Activated CD4-positive, alpha-beta T cell treated with anti-CD3 and anti-CD28 coated beads for 36 hours (primary cell): ENCODE measurements at regions of chr9 and their contacts with region 1.

Region 1: DNA sequence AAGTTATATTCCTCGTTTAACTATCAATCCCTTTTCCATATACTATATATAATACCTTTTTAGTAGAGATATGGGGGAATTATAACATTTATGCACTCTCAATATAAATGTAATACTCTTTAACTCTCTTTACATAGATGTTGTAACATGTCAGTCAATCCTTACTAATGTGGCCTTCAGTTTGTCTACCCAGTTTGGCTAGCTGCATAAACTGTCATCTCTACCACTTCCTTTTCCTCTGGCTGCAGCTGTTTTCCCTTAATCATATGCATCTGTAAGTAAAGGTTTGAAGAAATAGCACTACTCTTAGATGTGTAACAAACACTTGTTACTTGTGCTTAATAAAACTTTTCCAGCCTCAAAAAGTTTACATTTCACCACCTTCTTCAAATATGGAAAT is 13.4 kb downstream of the ABHD17B start:
- DNase-seq: no peak
- ATAC-seq: peak; percentile 69
- H3K4me3 Mint-ChIP-seq: no peak overlapping the region
- H3K27ac Mint-ChIP-seq: no peak overlapping the region
- H3K4me1 Mint-ChIP-seq: peaks cover 75% of the 10 kb centered on the region
- H3K27me3 Mint-ChIP-seq: no peaks in the 10 kb centered on the region

Region 2: DNA sequence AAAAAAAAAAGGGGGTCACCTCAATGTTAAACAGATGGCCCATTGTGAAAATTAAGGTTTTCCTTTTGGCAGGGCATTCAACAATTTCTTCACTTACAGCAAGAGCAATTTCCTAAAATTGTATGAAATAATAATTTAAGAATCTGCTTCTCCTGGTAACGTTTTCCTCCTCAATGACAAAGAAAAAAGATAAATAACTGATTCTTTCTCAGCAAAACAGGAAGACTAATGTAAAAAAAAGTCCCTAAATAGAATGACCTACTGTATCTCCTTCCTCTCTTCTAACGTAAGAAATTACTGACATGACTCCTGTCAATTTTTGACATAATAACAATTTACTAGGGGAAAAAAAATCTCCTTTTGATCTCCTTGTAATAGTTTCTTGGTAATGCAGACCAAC is 12.1 kb before region 1 on chr9:
- CTCF ChIA-PET with region 1: interaction called, 5 read pairs
- POLR2A ChIA-PET with region 1: no interaction called
- intact Hi-C with region 1: loop called in 1 of 2 experiments (anchors 1 kb)
- DNase-seq: no peak
- ATAC-seq: no peak
- H3K4me3 Mint-ChIP-seq: no peak overlapping the region
- H3K27ac Mint-ChIP-seq: no peak overlapping the region
- H3K4me1 Mint-ChIP-seq: peaks cover 31% of the 10 kb centered on the region
- H3K27me3 Mint-ChIP-seq: no peaks in the 10 kb centered on the region